ENCODE measurements at regions of chr7 and their contacts with region 1.

Region 1: GRCh38 chr7:36291387-36292316 is 98.0 kb upstream of the ANLN start:
- DNase-seq: peak; percentile 77
- H3K4me3 ChIP-seq: peak overlapping the region; percentile 35
- H3K27ac ChIP-seq: no peak overlapping the region
- H3K4me1 ChIP-seq: peaks cover 30% of the 10 kb centered on the region
- CTCF ChIP-seq: peak; percentile 96

Region 2: GRCh38 chr7:35694781-35695472 is 596.7 kb before region 1 on chr7 and contains the start of gene HERPUD2:
- CTCF ChIA-PET with region 1: no interaction called
- POLR2A ChIA-PET with region 1: no interaction called
- intact Hi-C with region 1: loop called (anchors 5 kb)
- DNase-seq: peak; percentile 92
- H3K4me3 ChIP-seq: peak within 1 kb of the TSS; percentile 87
- H3K27ac ChIP-seq: peak within 1 kb of the TSS; percentile 52
- H3K4me1 ChIP-seq: peaks cover 41% of the 10 kb centered on the region
- CTCF ChIP-seq: no peak
- total RNA-seq, gene HERPUD2: 11.9 and 18.8 TPM in 2 replicates

Region 3: GRCh38 chr7:35828817-35829216 is 462.8 kb before region 1 on chr7:
- CTCF ChIA-PET with region 1: no interaction called
- POLR2A ChIA-PET with region 1: no interaction called
- intact Hi-C with region 1: no loop called
- DNase-seq: no peak
- H3K4me3 ChIP-seq: no peak overlapping the region
- H3K27ac ChIP-seq: no peak overlapping the region
- H3K4me1 ChIP-seq: peaks cover 8% of the 10 kb centered on the region
- CTCF ChIP-seq: no peak

Region 4: DNA sequence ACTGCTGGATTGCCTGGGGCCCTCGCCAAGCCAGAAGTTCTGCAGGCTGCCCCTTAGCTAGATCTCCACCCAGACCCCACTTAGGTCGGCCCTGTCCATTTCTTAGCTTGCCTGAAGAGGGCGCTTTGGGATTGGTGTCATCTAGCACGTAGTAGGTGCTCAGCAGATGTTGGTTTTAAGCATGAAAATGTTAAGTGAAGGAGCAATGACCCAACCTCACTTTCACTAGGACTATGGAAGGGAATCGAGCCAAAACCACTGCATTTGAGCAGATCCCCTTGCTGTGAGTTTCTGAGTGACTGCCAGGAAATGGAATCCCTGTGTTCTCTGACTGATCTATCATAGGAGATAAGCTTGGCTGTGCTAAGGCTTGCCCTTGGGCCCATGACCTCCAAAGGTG is 270.3 kb before region 1 on chr7:
- CTCF ChIA-PET with region 1: no interaction called
- POLR2A ChIA-PET with region 1: interaction called, 4 read pairs
- intact Hi-C with region 1: loop called (anchors 1 kb)
- DNase-seq: peak; percentile 19
- H3K4me3 ChIP-seq: no peak overlapping the region
- H3K27ac ChIP-seq: no peak overlapping the region
- H3K4me1 ChIP-seq: no peaks in the 10 kb centered on the region
- CTCF ChIP-seq: peak; percentile 78

Region 5: DNA sequence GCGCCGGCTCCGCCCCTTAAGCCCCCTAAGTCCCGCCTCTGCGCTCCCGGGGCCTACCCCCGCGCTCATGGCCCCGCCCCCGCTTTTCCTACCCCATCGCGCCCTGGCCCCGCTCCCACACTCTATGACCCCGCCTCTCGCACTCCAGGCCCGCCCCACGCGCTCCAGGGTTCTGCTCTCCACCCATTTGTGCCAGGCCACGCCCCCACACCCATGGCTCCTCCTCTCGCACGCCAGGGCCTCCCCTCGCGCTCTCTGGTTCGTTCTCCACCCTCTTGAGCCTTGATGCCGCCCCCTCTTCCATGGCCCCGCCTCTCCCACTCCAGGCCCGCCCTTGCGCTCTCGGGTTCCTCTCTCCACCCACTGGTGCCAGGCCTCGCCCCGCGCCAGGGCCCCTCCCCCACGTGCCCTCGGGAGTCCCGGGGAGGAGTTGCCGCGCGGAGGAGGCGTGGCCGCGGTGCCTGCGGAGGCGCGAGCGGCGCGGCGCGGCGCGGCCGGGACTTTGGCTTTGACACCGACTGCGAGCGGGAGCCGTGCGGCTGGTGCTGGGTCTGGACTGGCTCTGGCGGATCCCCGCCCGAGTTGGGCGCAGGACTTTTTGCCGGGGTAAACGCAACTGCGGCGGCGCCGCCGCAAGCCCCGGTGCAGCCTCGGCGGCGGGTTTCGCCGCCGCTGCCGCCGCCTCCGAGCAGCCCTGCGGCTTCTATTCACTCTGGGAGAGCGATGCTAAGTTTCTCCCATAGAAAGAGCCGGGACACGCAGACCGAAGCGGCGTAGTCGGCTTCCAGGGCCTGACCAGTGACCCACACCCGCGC is 138.7 kb before region 1 on chr7 and contains the start of gene EEPD1:
- CTCF ChIA-PET with region 1: no interaction called
- POLR2A ChIA-PET with region 1: no interaction called
- intact Hi-C with region 1: loop called (anchors 1 kb)
- DNase-seq: peak; percentile 97
- H3K4me3 ChIP-seq: peak within 1 kb of the TSS; percentile 76
- H3K27ac ChIP-seq: no peak within 1 kb of the TSS
- H3K4me1 ChIP-seq: peaks cover 25% of the 10 kb centered on the region
- CTCF ChIP-seq: no peak
- total RNA-seq, gene EEPD1: 1.7 and 5.1 TPM in 2 replicates

Region 6: DNA sequence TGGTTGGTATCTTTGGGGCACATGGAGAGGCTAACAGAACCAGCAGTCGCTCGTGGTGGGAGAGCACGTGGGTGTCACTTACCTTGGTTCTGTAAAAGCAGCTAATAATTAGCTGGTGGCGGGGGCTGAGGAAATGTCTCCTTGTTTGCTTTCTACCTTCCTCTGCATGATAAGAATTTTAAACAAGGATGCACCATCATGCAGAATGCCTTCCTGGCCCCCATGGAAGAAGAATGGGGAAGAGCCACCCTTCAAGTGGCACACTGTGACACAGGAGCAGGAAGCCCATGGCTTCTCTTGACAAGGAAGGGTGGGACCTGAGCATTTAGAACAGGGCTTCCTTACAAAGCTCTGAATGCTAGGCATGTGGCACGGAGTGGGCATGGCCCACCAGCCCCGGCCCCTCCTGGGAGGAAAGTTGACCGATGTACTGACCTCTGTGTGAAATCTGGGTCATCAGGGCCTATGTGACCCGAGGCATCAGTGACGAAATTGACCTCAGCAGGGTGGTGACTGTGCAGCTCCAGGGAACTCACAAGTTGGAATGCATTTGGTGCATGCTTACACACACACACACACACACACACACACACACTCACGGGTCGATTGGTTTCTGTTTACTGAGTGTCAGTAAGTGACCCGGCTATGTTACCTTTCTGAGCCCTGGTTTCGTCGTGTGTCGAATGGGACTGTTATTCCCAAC is 18.9 kb before region 1 on chr7:
- CTCF ChIA-PET with region 1: no interaction called
- POLR2A ChIA-PET with region 1: interaction called, 13 read pairs
- intact Hi-C with region 1: no loop called
- DNase-seq: no peak
- H3K4me3 ChIP-seq: no peak overlapping the region
- H3K27ac ChIP-seq: no peak overlapping the region
- H3K4me1 ChIP-seq: no peaks in the 10 kb centered on the region
- CTCF ChIP-seq: no peak

Region 7: GRCh38 chr7:36315309-36316133 is 23.9 kb after region 1 on chr7:
- CTCF ChIA-PET with region 1: interaction called, 4 read pairs
- POLR2A ChIA-PET with region 1: no interaction called
- intact Hi-C with region 1: loop called (anchors 1 kb)
- DNase-seq: peak; percentile 13
- H3K4me3 ChIP-seq: no peak overlapping the region
- H3K27ac ChIP-seq: no peak overlapping the region
- H3K4me1 ChIP-seq: no peaks in the 10 kb centered on the region
- CTCF ChIP-seq: no peak